ENCODE measurements at regions of chr2 and their contacts with region 1.

Region 1: DNA sequence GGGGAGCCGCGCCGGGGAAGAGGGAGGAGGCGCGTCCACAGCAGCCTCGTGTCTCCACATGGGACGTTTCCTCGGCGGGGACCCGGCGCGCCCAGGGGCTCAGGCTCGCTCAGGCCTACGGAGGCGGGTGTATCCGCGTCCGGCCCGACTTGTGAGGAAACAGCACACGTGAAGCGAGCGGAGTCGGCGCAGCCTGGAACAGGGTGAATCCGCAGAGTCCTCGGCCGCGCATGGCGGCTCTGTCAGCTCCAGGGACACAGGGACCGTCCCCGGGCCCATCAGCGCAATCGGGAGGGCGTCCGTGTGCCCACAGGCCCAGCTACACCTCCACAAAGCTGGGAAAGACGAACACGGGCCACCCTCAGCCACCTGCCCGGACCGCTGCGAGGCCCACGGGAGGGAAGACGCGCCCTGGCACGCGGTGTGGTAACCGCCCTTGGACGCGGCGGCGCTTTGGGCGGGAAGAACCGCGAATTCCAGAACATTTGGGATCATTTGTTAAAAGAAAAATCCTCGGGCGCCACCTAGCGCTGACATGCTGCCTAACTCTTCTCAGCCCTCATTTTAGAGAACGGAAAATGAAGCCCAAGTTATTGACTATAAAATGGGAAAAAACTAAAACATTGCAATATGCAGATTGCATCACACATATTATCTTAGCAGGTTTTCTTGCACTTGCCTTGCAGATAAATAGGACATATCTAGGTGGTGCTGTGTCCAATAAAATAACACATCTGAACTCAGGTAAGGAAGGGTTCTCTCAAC is 40.4 kb downstream of the TMEM18 start:
- DNase-seq: peak; percentile 27 to 66 (median 45)
- ATAC-seq: peak; percentile 72
- H3K4me3 ChIP-seq: peak overlapping the region; percentile 62
- H3K4me3 Mint-ChIP-seq: peak overlapping the region; percentile 78 to 90 (median 84)
- H3K27ac ChIP-seq: peak overlapping the region; percentile 59
- H3K27ac Mint-ChIP-seq: peak overlapping the region in 8 of 9 donors; percentile 2 to 86 (median 74)
- H3K4me1 ChIP-seq: no peaks in the 10 kb centered on the region
- H3K4me1 Mint-ChIP-seq: peaks cover 0 to 5% (median 0%) of the 10 kb centered on the region in 7 donors
- H3K27me3 ChIP-seq: no peaks in the 10 kb centered on the region
- H3K27me3 Mint-ChIP-seq: peaks cover 0 to 7% (median 0%) of the 10 kb centered on the region in 5 donors

Region 2: GRCh38 chr2:246489-247144 is 390.2 kb before region 1 on chr2:
- CTCF ChIA-PET with region 1: interaction called, 5 read pairs
- POLR2A ChIA-PET with region 1: no interaction called
- intact Hi-C with region 1: loop called (anchors 1 kb)
- DNase-seq: peak in 7 of 9 donors; percentile 21 to 57 (median 49)
- ATAC-seq: peak; percentile 57
- H3K4me3 ChIP-seq: no peak overlapping the region
- H3K4me3 Mint-ChIP-seq: no peak overlapping the region
- H3K27ac ChIP-seq: no peak overlapping the region
- H3K27ac Mint-ChIP-seq: peak overlapping the region in 3 of 9 donors; percentile 7 to 34 (median 24)
- H3K4me1 ChIP-seq: no peaks in the 10 kb centered on the region
- H3K4me1 Mint-ChIP-seq: peaks cover 4 to 9% (median 7%) of the 10 kb centered on the region in 7 donors
- H3K27me3 ChIP-seq: no peaks in the 10 kb centered on the region
- H3K27me3 Mint-ChIP-seq: no peaks in the 10 kb centered on the region

Region 3: DNA sequence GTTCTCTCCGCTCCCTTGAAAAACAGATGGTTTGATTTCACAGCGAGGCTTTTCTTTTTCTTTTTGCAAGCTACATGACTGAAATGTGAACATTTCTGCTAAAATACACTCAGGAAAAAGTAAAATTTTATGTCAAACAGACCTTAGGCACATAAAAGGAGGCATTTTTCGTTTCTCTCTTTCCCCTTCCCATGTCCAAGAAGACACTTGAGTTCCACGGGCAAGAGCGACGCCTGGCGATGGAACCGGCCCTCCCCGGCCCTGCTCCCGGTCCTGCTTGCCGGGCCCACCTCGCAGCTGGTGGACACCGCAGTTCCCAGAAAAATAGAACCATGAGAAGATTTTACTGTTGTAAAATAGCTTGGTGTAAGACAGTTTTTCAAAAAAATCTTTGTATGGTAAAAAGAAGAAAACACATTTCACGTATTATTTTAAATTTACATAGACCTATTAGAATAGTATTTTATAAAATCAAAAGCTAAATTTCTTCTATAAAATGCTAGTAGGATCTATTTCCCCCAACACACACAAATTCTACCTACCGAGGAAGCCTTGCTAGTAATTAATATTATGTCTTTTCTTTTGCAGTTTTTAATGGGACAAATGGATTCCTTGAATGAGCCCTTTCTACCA is 346.6 kb before region 1 on chr2:
- CTCF ChIA-PET with region 1: interaction called, 3 read pairs
- POLR2A ChIA-PET with region 1: no interaction called
- intact Hi-C with region 1: loop called in 1 of 2 experiments (anchors 5 kb)
- DNase-seq: peak; percentile 20 to 57 (median 45)
- ATAC-seq: peak; percentile 60
- H3K4me3 ChIP-seq: peak overlapping the region; percentile 55
- H3K4me3 Mint-ChIP-seq: peak overlapping the region; percentile 76 to 90 (median 84)
- H3K27ac ChIP-seq: no peak overlapping the region
- H3K27ac Mint-ChIP-seq: no peak overlapping the region
- H3K4me1 ChIP-seq: peaks cover 10 to 12% of the 10 kb centered on the region in 2 donors
- H3K4me1 Mint-ChIP-seq: peaks cover 0 to 16% (median 8%) of the 10 kb centered on the region in 7 donors
- H3K27me3 ChIP-seq: peaks cover 2 to 8% of the 10 kb centered on the region in 2 donors
- H3K27me3 Mint-ChIP-seq: peaks cover 24 to 53% (median 41%) of the 10 kb centered on the region in 5 donors

Region 4: DNA sequence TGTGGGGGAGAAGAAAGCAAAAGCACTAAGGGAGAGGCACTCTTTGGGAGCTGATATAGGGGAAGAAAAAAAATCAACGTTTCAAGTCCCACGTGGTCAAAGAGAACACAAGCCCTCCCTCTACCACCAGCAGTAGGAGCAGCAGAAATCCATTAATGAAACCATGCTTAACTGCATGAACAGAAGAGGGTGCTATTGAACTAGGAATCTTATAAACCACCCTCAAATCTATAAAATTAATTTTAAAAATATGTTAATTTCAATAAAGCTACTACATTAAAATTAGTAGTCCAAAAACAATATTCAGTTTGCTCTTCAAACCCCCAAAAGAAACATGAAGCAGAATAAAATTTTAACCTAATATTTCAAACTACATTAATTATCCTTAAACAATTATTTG is 107.4 kb before region 1 on chr2:
- CTCF ChIA-PET with region 1: interaction called, 5 read pairs
- POLR2A ChIA-PET with region 1: no interaction called
- intact Hi-C with region 1: loop called (anchors 1 kb)
- DNase-seq: peak in 7 of 9 donors; percentile 2 to 39 (median 21)
- ATAC-seq: peak; percentile 65
- H3K4me3 ChIP-seq: no peak overlapping the region
- H3K4me3 Mint-ChIP-seq: no peak overlapping the region
- H3K27ac ChIP-seq: no peak overlapping the region
- H3K27ac Mint-ChIP-seq: no peak overlapping the region
- H3K4me1 ChIP-seq: no peaks in the 10 kb centered on the region
- H3K4me1 Mint-ChIP-seq: no peaks in the 10 kb centered on the region
- H3K27me3 ChIP-seq: no peaks in the 10 kb centered on the region
- H3K27me3 Mint-ChIP-seq: peaks cover 6 to 26% (median 8%) of the 10 kb centered on the region in 5 donors

Region 5: DNA sequence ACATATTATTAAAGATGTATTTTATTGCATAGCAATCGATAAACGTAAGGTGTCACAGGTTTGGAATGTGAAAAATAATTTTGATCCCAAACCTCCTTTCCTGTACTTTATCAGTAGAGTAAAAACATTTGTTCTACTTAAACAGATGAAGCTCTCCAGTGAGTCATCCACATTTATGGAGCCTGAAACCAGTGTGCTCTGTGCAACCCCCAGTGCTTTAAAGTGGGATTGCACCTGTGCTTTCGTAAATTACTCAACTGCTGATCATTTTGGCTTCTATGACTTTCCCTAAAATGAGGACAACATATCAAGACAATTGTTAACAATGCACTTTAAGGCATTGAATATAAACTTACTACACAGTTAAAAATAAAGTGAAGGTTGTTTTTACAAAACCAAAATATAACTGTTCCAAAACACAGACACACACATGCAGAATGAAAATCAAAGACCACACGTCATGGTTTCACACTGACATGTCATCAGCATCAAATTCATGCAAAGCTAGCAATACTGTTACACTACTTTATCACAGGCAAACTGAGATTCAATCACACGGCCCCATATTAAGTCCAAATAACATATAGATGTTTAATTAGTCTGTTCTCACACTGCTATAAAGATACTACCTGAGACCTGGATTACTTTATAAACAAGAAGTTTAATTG is 30.6 kb after region 1 on chr2:
- CTCF ChIA-PET with region 1: interaction called, 3 read pairs
- POLR2A ChIA-PET with region 1: no interaction called
- intact Hi-C with region 1: loop called in 1 of 2 experiments (anchors 2 kb)
- DNase-seq: no peak
- ATAC-seq: peak; percentile 66
- H3K4me3 ChIP-seq: no peak overlapping the region
- H3K4me3 Mint-ChIP-seq: no peak overlapping the region
- H3K27ac ChIP-seq: no peak overlapping the region
- H3K27ac Mint-ChIP-seq: peak overlapping the region in 1 of 9 donors; percentile 42
- H3K4me1 ChIP-seq: peaks cover 3 to 4% of the 10 kb centered on the region in 2 donors
- H3K4me1 Mint-ChIP-seq: peaks cover 10 to 33% (median 13%) of the 10 kb centered on the region in 7 donors
- H3K27me3 ChIP-seq: no peaks in the 10 kb centered on the region
- H3K27me3 Mint-ChIP-seq: no peaks in the 10 kb centered on the region